ENCODE measurements at regions of chr20 and their contacts with region 1.

Region 1: DNA sequence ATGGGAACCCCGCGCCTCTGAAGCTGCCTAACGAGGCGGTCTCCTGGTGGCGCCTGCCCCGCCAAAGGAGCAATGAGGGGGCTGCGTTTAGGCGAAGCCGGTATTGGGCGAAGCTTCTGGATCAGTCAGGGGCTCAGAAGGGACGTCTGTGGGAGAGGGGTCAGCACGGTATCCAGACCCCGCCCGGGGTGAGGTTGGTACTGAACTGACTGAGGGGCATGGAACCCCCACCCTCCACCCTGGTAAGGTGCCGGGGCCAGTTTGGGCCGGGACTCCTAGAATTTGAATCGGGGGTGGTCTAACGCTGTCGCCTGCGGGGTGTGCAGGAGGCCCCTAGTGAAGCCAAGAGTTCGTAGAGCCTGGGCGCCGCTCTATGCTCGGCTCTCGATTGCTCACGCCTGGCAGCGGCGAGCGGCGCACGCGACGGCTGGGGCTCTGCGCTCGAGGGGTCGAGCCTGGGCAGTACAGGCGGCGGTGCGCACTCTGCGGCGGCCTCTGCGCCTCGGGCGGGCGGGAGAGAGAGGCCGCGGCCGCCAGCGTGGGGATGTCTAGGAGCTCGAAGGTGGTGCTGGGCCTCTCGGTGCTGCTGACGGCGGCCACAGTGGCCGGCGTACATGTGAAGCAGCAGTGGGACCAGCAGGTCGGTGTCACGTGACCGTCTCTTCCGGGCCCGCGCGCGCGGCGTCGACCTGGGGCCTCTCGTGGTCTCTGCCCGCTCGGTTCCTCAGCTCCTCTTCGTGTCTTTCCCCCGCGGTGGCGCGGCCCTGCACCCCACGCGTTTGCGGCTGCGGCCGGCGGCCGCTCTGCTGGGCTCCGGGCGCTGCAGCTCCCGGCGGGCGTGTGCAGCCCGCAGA is at the starts of genes KAT14 and PET117:
- DNase-seq: peak; percentile 90
- H3K4me3 Mint-ChIP-seq: peak within 1 kb of the TSS; percentile 90
- H3K27ac Mint-ChIP-seq: peak within 1 kb of the TSS; percentile 82
- H3K4me1 Mint-ChIP-seq: peaks cover 29% of the 10 kb centered on the region
- H3K27me3 Mint-ChIP-seq: no peaks in the 10 kb centered on the region
- total RNA-seq, gene KAT14: 17.1 and 17.9 TPM in 2 replicates
- total RNA-seq, gene PET117: 16.3 and 16.7 TPM in 2 replicates

Region 2: GRCh38 chr20:16729565-16730456 is 1407.8 kb before region 1 on chr20 and contains the start of gene SNRPB2:
- intact Hi-C with region 1: loop called (anchors 2 kb)
- DNase-seq: peak; percentile 88
- H3K4me3 Mint-ChIP-seq: peak within 1 kb of the TSS; percentile 98
- H3K27ac Mint-ChIP-seq: peak within 1 kb of the TSS; percentile 98
- H3K4me1 Mint-ChIP-seq: peaks cover 50% of the 10 kb centered on the region
- H3K27me3 Mint-ChIP-seq: peaks cover 8% of the 10 kb centered on the region
- total RNA-seq, gene SNRPB2: 130 and 131 TPM in 2 replicates

Region 3: GRCh38 chr20:17558154-17558940 is 579.3 kb before region 1 on chr20:
- intact Hi-C with region 1: loop called (anchors 1 kb)
- DNase-seq: no peak
- H3K4me3 Mint-ChIP-seq: peak overlapping the region; percentile 71
- H3K27ac Mint-ChIP-seq: peak overlapping the region; percentile 95
- H3K4me1 Mint-ChIP-seq: peaks cover 43% of the 10 kb centered on the region
- H3K27me3 Mint-ChIP-seq: no peaks in the 10 kb centered on the region

Region 4: GRCh38 chr20:17898548-17898994 is 239.1 kb before region 1 on chr20:
- intact Hi-C with region 1: loop called (anchors 5 kb)
- DNase-seq: peak; percentile 44
- H3K4me3 Mint-ChIP-seq: no peak overlapping the region
- H3K27ac Mint-ChIP-seq: no peak overlapping the region
- H3K4me1 Mint-ChIP-seq: peaks cover 37% of the 10 kb centered on the region
- H3K27me3 Mint-ChIP-seq: peaks cover 17% of the 10 kb centered on the region

Region 5: GRCh38 chr20:18056174-18057100 is 81.2 kb before region 1 on chr20:
- intact Hi-C with region 1: loop called (anchors 5 kb)
- DNase-seq: no peak
- H3K4me3 Mint-ChIP-seq: peak overlapping the region; percentile 60
- H3K27ac Mint-ChIP-seq: no peak overlapping the region
- H3K4me1 Mint-ChIP-seq: no peaks in the 10 kb centered on the region
- H3K27me3 Mint-ChIP-seq: peaks cover 65% of the 10 kb centered on the region

Region 6: GRCh38 chr20:18263723-18264122 is 126.1 kb after region 1 on chr20:
- intact Hi-C with region 1: no loop called
- DNase-seq: no peak
- H3K4me3 Mint-ChIP-seq: no peak overlapping the region
- H3K27ac Mint-ChIP-seq: no peak overlapping the region
- H3K4me1 Mint-ChIP-seq: no peaks in the 10 kb centered on the region
- H3K27me3 Mint-ChIP-seq: peaks cover 17% of the 10 kb centered on the region

Region 7: DNA sequence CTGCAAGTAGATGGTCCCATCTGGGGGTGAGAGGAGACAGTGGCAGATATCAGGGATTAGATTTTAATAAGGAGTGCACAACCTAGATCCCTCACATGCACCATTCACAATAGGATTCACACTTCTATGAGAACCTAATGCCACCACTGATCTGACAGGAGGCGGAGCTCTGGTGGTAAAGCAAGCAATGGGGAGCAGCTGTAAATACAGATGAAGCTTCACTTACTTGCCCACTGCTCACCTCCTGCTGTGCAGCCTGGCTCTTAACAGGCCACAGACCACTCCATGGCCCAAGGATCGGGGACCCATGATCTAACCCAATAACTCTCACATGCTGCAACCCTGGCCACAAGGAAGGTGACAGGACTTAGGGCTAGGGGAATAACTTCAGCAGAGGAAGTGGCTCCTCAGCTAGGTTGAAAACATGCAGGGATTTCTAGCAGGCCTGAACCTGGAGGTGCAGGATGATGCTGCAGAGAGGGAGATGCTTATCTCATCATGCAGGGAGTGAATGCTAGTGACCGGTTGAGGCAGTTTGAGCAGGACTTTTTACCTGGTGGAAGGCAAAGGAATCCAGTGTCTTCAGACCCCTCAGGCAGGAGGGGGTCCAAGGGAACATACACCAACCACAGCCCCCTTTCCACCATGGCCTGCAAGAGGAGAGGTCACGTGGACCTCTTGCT is 226.2 kb after region 1 on chr20:
- intact Hi-C with region 1: no loop called
- DNase-seq: no peak
- H3K4me3 Mint-ChIP-seq: no peak overlapping the region
- H3K27ac Mint-ChIP-seq: no peak overlapping the region
- H3K4me1 Mint-ChIP-seq: no peaks in the 10 kb centered on the region
- H3K27me3 Mint-ChIP-seq: no peaks in the 10 kb centered on the region

Region 8: GRCh38 chr20:18466894-18467730 is 329.5 kb after region 1 on chr20 and contains the starts of genes DZANK1 and POLR3F:
- intact Hi-C with region 1: loop called (anchors 1 kb)
- DNase-seq: peak; percentile 90
- H3K4me3 Mint-ChIP-seq: peak within 1 kb of the TSS; percentile 99
- H3K27ac Mint-ChIP-seq: peak within 1 kb of the TSS; percentile 92
- H3K4me1 Mint-ChIP-seq: peaks cover 31% of the 10 kb centered on the region
- H3K27me3 Mint-ChIP-seq: no peaks in the 10 kb centered on the region
- total RNA-seq, gene DZANK1: 1.1 and 1.8 TPM in 2 replicates
- total RNA-seq, gene POLR3F: 13.4 and 16.6 TPM in 2 replicates

Region 9: GRCh38 chr20:18793625-18794427 is 656.2 kb after region 1 on chr20:
- intact Hi-C with region 1: loop called (anchors 10 kb)
- DNase-seq: peak; percentile 80
- H3K4me3 Mint-ChIP-seq: peak overlapping the region; percentile 87
- H3K27ac Mint-ChIP-seq: peak overlapping the region; percentile 82
- H3K4me1 Mint-ChIP-seq: peaks cover 12% of the 10 kb centered on the region
- H3K27me3 Mint-ChIP-seq: no peaks in the 10 kb centered on the region

Measured in activated T-helper 1 cell treated with anti-CD3 and anti-CD28 coated beads, Interleukin-12 subunit alpha, Interleukin-12 subunit beta, Interleukin-2, Interleukin-4 antibody, amounts not matched to agents 30 ng/mL and 10 ng/mL and 1 ng/mL, durations not matched to agents 14 hours and 24 hours and 36 hours (primary cell).